ENCODE measurements at regions of chr1 and their contacts with region 1.

Region 1: GRCh38 chr1:7667625-7668218 is 103.4 kb upstream of the VAMP3 start:
- DNase-seq: peak; percentile 65
- H3K4me3 ChIP-seq: no peak overlapping the region
- H3K27ac ChIP-seq: peak overlapping the region; percentile 31
- H3K27me3 ChIP-seq: peaks cover 2% of the 10 kb centered on the region
- CTCF ChIP-seq: peak; percentile 100

Region 2: GRCh38 chr1:7299329-7299799 is 368.4 kb before region 1 on chr1:
- CTCF ChIA-PET with region 1: no interaction called
- POLR2A ChIA-PET with region 1: no interaction called
- DNase-seq: peak; percentile 98
- H3K4me3 ChIP-seq: peak overlapping the region; percentile 48
- H3K27ac ChIP-seq: peak overlapping the region; percentile 100
- H3K27me3 ChIP-seq: no peaks in the 10 kb centered on the region
- CTCF ChIP-seq: no peak

Region 3: GRCh38 chr1:7680207-7680954 is 12.7 kb after region 1 on chr1:
- CTCF ChIA-PET with region 1: interaction called, 79 read pairs
- POLR2A ChIA-PET with region 1: interaction called, 7 read pairs
- DNase-seq: no peak
- H3K4me3 ChIP-seq: peak overlapping the region; percentile 64
- H3K27ac ChIP-seq: no peak overlapping the region
- H3K27me3 ChIP-seq: peaks cover 40% of the 10 kb centered on the region
- CTCF ChIP-seq: no peak

Region 4: DNA sequence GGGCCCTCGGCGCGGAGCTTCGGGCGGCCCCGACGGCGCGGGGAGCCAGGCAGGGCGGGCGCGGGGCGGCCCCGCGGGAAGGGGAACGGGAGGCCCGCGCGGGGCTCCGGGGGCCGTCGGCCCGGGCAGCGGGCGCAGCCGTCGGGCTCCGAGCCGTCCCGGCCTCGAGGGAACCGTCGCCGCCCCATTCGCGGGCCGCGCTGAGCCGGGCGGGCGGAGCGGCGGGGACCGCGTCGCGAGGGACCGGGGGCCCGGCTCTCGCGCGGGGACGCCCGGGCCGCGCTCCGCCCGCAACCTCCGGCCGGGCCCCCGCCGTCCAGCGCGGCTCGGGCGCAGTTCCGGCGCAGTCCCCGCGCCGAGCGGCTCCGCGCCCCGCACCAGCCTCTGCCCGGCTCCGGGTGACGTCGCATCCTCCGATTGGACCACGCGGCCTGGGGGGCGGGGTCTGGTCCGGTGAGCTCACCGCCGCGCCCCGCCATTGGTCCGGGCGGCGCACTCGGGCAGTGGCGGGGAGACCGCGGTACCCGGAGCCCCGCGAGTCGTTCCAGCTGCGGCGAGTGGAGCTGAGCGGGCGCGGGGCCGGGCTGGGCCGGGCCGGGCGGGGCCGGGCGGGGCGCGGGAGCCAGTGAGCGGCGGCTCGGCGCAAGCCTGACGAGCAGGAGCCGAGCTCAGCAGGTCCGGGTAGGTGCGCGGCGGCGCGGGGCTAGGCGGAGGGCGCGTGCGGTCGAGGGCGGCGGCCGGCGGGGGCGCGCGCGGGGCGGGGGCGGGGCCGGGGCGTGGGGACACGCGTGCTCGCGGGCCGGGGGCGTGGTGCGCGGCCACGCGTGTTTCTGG is 36.7 kb after region 1 on chr1:
- CTCF ChIA-PET with region 1: interaction called, 11 read pairs
- POLR2A ChIA-PET with region 1: no interaction called
- DNase-seq: peak; percentile 45
- H3K4me3 ChIP-seq: peak overlapping the region; percentile 17; the same call in 1 of the 2 replicates
- H3K27ac ChIP-seq: no peak overlapping the region
- H3K27me3 ChIP-seq: peaks cover 52% of the 10 kb centered on the region
- CTCF ChIP-seq: no peak

Region 5: GRCh38 chr1:7721940-7722669 is 54.4 kb after region 1 on chr1:
- CTCF ChIA-PET with region 1: interaction called, 11 read pairs
- POLR2A ChIA-PET with region 1: no interaction called
- DNase-seq: no peak
- H3K4me3 ChIP-seq: no peak overlapping the region
- H3K27ac ChIP-seq: no peak overlapping the region
- H3K27me3 ChIP-seq: peaks cover 22% of the 10 kb centered on the region
- CTCF ChIP-seq: no peak

Region 6: DNA sequence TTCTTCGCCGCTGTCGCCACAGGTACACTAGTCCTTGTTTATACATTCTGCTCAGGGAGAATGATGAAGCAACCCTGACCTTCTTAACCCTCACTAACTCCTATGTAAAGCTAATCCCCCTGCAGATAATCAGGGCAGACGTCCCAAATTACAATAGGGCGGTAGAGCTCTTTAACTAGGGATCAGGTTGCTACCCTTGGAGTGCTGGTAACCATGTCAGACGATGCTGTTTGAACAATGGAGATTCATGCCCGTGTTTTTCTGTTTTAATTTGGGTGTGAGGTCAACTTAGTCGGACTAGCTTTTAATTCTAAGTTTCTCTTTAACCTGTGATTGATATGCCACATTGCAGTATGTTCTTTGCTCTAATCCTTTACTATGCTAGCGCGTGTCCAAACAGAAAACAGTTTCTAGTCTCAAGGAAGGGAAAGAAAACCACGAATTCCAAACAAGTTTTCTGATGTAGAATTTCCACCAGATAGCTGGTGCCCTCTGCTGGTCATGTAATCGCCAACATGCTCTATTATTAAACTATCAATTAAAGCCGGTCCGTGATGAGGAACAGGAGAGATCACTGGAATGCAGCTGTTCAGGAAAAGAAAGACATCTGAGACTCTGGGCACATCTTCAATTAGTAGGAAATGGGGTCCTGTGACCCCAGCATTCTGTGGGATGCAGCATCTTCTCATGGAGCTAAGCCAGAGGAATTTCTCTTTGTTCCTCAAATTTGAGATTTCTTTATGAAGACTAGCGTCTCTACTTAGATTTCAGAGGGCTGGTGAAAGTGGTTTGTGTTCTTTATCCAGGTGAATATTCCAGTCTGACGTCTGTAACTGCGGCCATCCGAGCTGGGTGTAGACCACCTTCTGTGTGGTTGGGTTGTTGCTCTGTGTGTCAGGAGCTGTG is 85.0 kb after region 1 on chr1:
- CTCF ChIA-PET with region 1: interaction called, 677 read pairs
- POLR2A ChIA-PET with region 1: interaction called, 16 read pairs
- DNase-seq: peak; percentile 41
- H3K4me3 ChIP-seq: peak overlapping the region; percentile 55
- H3K27ac ChIP-seq: no peak overlapping the region
- H3K27me3 ChIP-seq: peaks cover 6% of the 10 kb centered on the region
- CTCF ChIP-seq: peak; percentile 87

Region 7: DNA sequence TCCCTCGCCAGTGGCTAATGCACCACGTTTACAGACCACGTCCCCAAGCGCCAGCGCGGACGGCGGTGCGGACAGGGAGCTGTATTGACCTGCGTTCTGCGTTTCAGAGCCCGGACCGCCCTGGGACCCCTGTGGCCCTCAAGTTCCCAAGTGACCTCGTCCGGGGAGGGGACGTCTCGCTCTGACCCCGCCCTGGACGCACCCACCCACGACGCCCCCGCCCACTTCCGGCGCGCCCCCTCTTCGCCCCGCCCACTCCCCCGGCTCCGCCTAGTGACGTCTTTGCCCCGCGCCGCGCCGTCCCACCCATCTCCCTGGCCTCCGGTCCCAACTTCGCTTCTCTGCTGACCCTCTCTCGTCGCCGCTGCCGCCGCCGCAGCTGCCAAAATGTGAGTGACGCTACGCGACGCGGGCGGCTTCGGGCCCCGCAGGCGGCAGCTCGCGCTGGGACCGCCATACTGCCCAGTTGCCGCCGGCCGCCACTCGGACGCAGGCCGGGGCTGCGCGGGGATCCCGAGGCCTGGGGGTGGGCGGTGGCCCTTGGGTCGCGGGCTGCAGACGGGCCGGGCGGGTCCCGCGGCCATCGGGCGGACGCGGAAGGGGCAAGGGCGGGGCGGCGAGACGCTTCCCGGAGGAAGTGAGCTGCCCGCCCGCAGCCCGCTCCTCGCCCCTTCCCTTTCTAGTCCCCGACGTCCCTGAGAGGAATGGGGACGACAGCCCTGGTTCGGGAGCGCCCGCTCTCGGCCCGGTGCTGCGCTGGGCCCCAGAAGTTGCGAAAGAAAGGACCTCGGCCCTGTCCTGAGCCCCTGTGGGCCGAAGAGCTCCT is 103.5 kb after region 1 on chr1 and contains the start of gene VAMP3:
- CTCF ChIA-PET with region 1: interaction called, 36 read pairs
- POLR2A ChIA-PET with region 1: no interaction called
- DNase-seq: no peak
- H3K4me3 ChIP-seq: peak within 1 kb of the TSS; percentile 85
- H3K27ac ChIP-seq: peak within 1 kb of the TSS; percentile 40
- H3K27me3 ChIP-seq: peaks cover 5% of the 10 kb centered on the region
- CTCF ChIP-seq: no peak
- polyA plus RNA-seq, gene VAMP3: 154 and 177 TPM in 2 replicates

Region 8: DNA sequence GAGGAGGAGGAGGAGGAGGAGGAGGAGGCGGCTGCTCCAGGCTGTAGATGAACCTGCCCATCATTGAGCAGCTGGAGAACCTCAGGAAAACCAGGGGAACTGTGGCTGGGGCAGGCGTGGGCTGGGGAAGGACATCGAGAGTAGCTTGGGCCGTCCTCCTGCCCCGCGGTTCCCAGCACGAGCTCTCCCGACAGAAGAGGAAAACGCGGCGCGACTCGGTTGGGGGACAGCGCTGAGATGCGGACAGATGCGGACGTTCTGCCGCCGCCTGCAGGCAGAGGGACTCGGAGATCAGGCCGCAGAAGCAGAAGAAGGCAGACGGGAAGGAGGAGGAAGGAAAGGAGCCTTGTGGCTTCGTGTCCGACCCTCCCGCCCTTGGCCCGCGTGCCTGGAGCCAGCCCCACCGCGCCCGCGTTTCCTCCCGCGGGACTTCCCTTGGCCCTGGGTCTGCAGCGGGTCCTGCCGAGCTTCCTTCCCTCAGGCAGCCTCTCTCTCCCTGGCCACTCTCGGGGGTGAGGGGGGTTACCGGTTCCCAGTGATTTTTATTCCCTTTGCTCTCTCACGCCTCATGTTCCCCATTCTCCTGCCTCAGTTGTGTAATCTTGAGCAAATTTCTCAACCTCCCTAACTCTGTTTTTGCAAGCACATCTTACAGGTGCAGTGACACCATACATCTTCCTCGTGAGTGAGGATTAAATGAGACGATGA is 274.6 kb after region 1 on chr1:
- CTCF ChIA-PET with region 1: interaction called, 12 read pairs
- POLR2A ChIA-PET with region 1: interaction called, 3 read pairs
- DNase-seq: no peak
- H3K4me3 ChIP-seq: peak overlapping the region; percentile 22
- H3K27ac ChIP-seq: no peak overlapping the region
- H3K27me3 ChIP-seq: peaks cover 5% of the 10 kb centered on the region
- CTCF ChIP-seq: peak; percentile 46

Measured in AG04450 (cell line).